Tibial artery (tissue), 4 donors: ENCODE measurements at regions of chr6 and their contacts with region 1.

Region 1: GRCh38 chr6:84222426-84222825 is 5.0 kb downstream of the CEP162 start:
- DNase-seq: no peak
- H3K4me3 ChIP-seq: no peak overlapping the region
- H3K27ac ChIP-seq: no peak overlapping the region
- H3K4me1 ChIP-seq: peaks cover 0 to 12% (median 5%) of the 10 kb centered on the region in 4 donors
- H3K27me3 ChIP-seq: no peaks in the 10 kb centered on the region
- CTCF ChIP-seq: no peak

Region 2: GRCh38 chr6:83879746-83880145 is 342.7 kb before region 1 on chr6:
- intact Hi-C with region 1: loop called (anchors 2 kb)
- DNase-seq: no peak
- H3K4me3 ChIP-seq: no peak overlapping the region
- H3K27ac ChIP-seq: no peak overlapping the region
- H3K4me1 ChIP-seq: peaks cover 0 to 20% (median 0%) of the 10 kb centered on the region in 4 donors
- H3K27me3 ChIP-seq: no peaks in the 10 kb centered on the region
- CTCF ChIP-seq: no peak